Activated T-helper 1 cell treated with anti-CD3 and anti-CD28 coated beads, Interleukin-12 subunit alpha, Interleukin-12 subunit beta, Interleukin-2, Interleukin-4 antibody, amounts not matched to agents 30 ng/mL and 10 ng/mL and 1 ng/mL, durations not matched to agents 14 hours and 24 hours and 36 hours (primary cell): ENCODE measurements at regions of chr1 and their contacts with region 1.

Region 1: DNA sequence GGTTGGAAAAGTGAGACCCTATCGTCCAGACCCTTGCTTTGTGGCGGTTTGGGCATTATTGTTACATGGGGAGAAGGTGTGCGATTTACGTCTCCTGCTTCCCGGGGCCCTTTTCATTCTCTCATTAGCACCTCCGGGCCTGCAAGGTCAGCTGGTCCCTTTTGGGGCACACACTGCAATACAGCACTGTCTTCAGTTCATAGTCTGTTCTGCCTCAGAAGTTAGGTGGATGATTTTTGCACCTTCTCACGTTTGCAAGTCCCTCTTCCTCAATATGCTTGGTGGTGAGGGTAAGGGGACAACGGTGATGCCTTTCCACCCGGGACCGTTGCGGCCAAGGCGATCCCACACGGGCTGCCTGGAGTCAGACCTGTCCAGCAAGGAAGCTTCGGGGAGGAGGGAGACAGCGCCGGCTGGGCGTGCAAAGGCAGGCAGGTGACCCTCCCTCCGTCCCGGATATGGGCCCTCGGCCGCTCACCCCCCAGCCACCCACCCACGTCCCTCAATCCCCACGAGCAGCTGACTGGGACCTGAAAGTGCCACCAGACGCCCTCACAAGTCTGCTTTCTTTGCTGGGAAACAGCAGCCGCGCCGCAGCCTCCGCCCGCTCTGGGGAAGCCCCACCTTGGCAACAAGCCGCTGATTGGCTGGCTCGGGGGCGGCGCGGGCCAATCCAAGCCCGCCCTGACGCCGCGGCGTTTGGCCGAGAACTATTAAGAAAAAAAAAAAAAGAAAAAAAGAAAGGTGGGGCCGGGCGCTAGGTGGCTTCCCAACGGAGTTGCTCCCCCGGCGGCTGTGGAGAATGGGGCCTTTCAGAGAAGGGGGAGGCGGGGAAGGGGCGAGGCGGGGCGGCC is 21.7 kb downstream of the BTG2 start:
- DNase-seq: peak; percentile 94
- H3K4me3 Mint-ChIP-seq: peak overlapping the region; percentile 79
- H3K27ac Mint-ChIP-seq: peak overlapping the region; percentile 97
- H3K4me1 Mint-ChIP-seq: peaks cover 65% of the 10 kb centered on the region
- H3K27me3 Mint-ChIP-seq: peaks cover 2% of the 10 kb centered on the region

Region 2: GRCh38 chr1:202160377-202160940 is 1166.6 kb before region 1 on chr1 and contains the start of gene PTPN7:
- intact Hi-C with region 1: loop called (anchors 10 kb)
- DNase-seq: peak; percentile 59
- H3K4me3 Mint-ChIP-seq: peak within 1 kb of the TSS; percentile 98
- H3K27ac Mint-ChIP-seq: peak within 1 kb of the TSS; percentile 94
- H3K4me1 Mint-ChIP-seq: peaks cover 77% of the 10 kb centered on the region
- H3K27me3 Mint-ChIP-seq: no peaks in the 10 kb centered on the region
- total RNA-seq, gene PTPN7: 584 and 597 TPM in 2 replicates

Region 3: GRCh38 chr1:203026031-203026989 is 300.7 kb before region 1 on chr1 and contains the start of gene PPFIA4:
- intact Hi-C with region 1: loop called (anchors 5 kb)
- DNase-seq: peak; percentile 87
- H3K4me3 Mint-ChIP-seq: peak within 1 kb of the TSS; percentile 85
- H3K27ac Mint-ChIP-seq: peak within 1 kb of the TSS; percentile 65
- H3K4me1 Mint-ChIP-seq: peaks cover 25% of the 10 kb centered on the region
- H3K27me3 Mint-ChIP-seq: no peaks in the 10 kb centered on the region
- total RNA-seq, gene PPFIA4: 11.5 and 14.9 TPM in 2 replicates

Region 4: DNA sequence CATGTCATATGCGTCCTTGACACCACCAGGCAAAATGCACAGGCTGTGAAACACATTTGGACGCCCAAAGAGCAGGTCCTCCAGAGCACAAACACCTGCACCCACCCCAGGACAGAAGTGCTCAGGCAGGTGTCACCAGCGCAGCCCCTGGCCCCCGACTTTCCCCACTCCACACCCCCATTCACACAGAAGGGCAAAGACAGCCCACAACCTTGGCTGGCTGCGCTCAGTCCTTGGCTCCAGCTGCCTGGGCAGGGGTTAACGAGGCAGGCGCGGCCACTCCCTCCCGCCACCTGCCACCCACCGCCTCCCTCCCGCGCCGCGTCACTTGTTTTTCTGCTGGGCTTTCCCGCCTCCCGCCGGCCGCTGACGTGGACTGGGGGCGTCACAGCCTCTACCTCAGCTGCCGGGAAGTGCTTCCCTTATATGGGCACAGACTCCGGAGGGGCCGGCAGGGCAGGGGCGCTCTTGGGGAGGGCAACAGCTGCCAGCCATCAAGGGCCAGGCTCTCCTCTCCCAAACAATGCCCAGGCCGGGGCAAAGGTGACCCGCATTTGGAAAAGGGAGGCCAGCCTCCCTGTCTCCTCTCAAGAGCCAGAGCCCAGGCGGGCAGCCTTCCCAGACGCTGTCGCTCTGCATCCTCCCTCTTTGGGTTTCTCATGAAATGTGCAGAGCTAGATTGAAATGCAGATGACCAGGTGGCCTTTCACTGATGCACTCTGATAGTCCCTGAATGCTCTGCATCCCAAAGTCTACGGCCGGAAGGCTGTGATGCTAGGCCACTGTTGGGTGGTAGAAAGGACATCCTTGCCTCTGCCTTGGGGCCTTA is 36.6 kb before region 1 on chr1:
- intact Hi-C with region 1: loop called (anchors 1 kb)
- DNase-seq: peak; percentile 96
- H3K4me3 Mint-ChIP-seq: peak overlapping the region; percentile 83
- H3K27ac Mint-ChIP-seq: peak overlapping the region; percentile 99
- H3K4me1 Mint-ChIP-seq: peaks cover 89% of the 10 kb centered on the region
- H3K27me3 Mint-ChIP-seq: no peaks in the 10 kb centered on the region

Region 5: GRCh38 chr1:203351037-203352013 is 24.3 kb after region 1 on chr1 and contains the start of gene FMOD:
- intact Hi-C with region 1: no loop called
- DNase-seq: no peak
- H3K4me3 Mint-ChIP-seq: peak within 1 kb of the TSS; percentile 43
- H3K27ac Mint-ChIP-seq: peak within 1 kb of the TSS; percentile 29
- H3K4me1 Mint-ChIP-seq: peaks cover 6% of the 10 kb centered on the region
- H3K27me3 Mint-ChIP-seq: peaks cover 18% of the 10 kb centered on the region
- total RNA-seq, gene FMOD: 3.4 and 4.1 TPM in 2 replicates

Region 6: DNA sequence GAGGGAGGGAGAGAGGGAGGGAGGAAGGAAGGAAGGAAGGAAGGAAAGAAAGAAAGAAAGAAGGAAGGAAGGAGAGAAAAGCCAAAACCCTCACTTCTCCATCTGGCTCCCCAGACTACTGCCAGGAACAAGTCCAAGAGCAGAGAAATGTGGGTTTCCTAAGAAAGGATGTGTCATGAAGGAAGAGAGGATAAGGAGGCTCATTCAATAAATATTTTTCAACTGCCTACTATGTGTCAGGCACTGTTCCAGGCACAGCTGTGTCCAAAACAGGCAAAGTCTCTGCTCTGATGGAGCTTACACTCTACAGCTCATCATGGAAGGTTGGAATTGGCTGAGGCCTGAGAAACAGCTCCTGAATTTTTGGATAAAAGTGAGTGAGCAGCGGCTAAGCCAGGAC is 257.0 kb after region 1 on chr1:
- intact Hi-C with region 1: no loop called
- DNase-seq: no peak
- H3K4me3 Mint-ChIP-seq: no peak overlapping the region
- H3K27ac Mint-ChIP-seq: no peak overlapping the region
- H3K4me1 Mint-ChIP-seq: no peaks in the 10 kb centered on the region
- H3K27me3 Mint-ChIP-seq: peaks cover 18% of the 10 kb centered on the region

Region 7: DNA sequence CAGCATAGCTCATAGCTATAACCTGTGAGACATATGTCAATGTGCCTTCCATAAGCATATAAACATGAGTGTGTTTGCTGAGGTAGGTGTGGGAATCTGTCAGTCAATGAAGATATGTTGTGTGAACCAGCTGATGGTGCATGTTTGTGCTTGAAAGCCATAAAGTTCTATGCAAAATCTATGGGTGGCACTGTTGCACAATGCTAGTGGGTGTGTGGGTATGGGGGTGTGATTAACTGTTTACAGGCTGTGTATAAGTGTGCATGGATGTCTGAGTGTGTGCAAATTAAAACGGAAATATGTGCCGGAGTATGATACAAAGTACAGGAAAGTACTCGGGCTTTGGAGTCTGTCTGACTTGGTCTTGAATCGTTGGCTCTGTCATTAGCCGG is 298.6 kb after region 1 on chr1:
- intact Hi-C with region 1: loop called (anchors 5 kb)
- DNase-seq: peak; percentile 55
- H3K4me3 Mint-ChIP-seq: peak overlapping the region; percentile 92
- H3K27ac Mint-ChIP-seq: peak overlapping the region; percentile 86
- H3K4me1 Mint-ChIP-seq: peaks cover 87% of the 10 kb centered on the region
- H3K27me3 Mint-ChIP-seq: no peaks in the 10 kb centered on the region

Region 8: GRCh38 chr1:203795441-203796235 is 468.6 kb after region 1 on chr1 and contains the starts of genes ZBED6 and ZC3H11A:
- intact Hi-C with region 1: loop called (anchors 1 kb)
- DNase-seq: peak; percentile 99
- H3K4me3 Mint-ChIP-seq: peak within 1 kb of the TSS; percentile 96
- H3K27ac Mint-ChIP-seq: peak within 1 kb of the TSS; percentile 98
- H3K4me1 Mint-ChIP-seq: peaks cover 42% of the 10 kb centered on the region
- H3K27me3 Mint-ChIP-seq: no peaks in the 10 kb centered on the region
- total RNA-seq, gene ZBED6: 19.8 and 21.3 TPM in 2 replicates
- total RNA-seq, gene ZC3H11A: 85.0 and 85.5 TPM in 2 replicates

Region 9: DNA sequence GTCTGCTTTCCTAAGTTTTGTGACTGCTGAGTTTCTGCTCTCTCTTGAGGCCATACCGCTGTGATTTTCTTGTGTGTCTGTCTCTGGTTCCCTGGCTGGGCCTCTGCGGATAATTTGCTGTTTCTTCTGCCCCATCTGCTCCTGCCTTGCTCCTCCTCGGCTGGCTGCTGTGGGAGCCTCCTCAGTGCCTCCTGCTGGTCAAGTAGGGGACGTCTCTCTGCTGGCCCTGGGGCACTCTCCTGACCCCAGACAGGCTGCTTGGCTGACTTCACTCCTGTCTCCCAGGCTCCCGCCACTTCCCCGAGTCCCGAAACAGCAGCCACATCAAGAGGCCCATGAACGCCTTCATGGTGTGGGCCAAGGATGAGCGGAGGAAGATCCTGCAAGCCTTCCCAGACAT is 796.3 kb after region 1 on chr1:
- intact Hi-C with region 1: no loop called
- DNase-seq: no peak
- H3K4me3 Mint-ChIP-seq: no peak overlapping the region
- H3K27ac Mint-ChIP-seq: no peak overlapping the region
- H3K4me1 Mint-ChIP-seq: peaks cover 2% of the 10 kb centered on the region
- H3K27me3 Mint-ChIP-seq: peaks cover 6% of the 10 kb centered on the region

Region 10: GRCh38 chr1:204506961-204507387 is 1179.9 kb after region 1 on chr1:
- intact Hi-C with region 1: loop called (anchors 5 kb)
- DNase-seq: peak; percentile 87
- H3K4me3 Mint-ChIP-seq: peak overlapping the region; percentile 94
- H3K27ac Mint-ChIP-seq: peak overlapping the region; percentile 98
- H3K4me1 Mint-ChIP-seq: peaks cover 48% of the 10 kb centered on the region
- H3K27me3 Mint-ChIP-seq: peaks cover 6% of the 10 kb centered on the region